Caco-2 (cell line): ENCODE measurements at regions of chr4 and their contacts with region 1.

Region 1: GRCh38 chr4:15001869-15002658 is at the start of gene CPEB2:
- DNase-seq: peak; percentile 63 to 82
- H3K4me3 ChIP-seq: peak within 1 kb of the TSS; percentile 52
- H3K4me3 Mint-ChIP-seq: peak within 1 kb of the TSS; percentile 71
- H3K27ac Mint-ChIP-seq: no peak within 1 kb of the TSS
- H3K4me1 ChIP-seq: 0 out of 2 replicates have a peak, but pooled peaks cover 5% of the 10 kb centered on the region
- H3K4me1 Mint-ChIP-seq: no peaks in the 10 kb centered on the region
- H3K27me3 ChIP-seq: no peaks in the 10 kb centered on the region; the same call in 1 of the 2 replicates
- H3K27me3 Mint-ChIP-seq: peaks cover 22% of the 10 kb centered on the region
- CTCF ChIP-seq: no peak
- total RNA-seq, gene CPEB2: 0.18 and 0.28 TPM in 2 replicates

Region 2: GRCh38 chr4:14827111-14827510 is 175.0 kb before region 1 on chr4:
- CTCF ChIA-PET with region 1: no interaction called
- POLR2A ChIA-PET with region 1: no interaction called
- intact Hi-C with region 1: no loop called
- DNase-seq: no peak
- H3K4me3 ChIP-seq: no peak overlapping the region
- H3K4me3 Mint-ChIP-seq: no peak overlapping the region
- H3K27ac Mint-ChIP-seq: no peak overlapping the region
- H3K4me1 ChIP-seq: no peaks in the 10 kb centered on the region
- H3K4me1 Mint-ChIP-seq: no peaks in the 10 kb centered on the region
- H3K27me3 ChIP-seq: no peaks in the 10 kb centered on the region
- H3K27me3 Mint-ChIP-seq: peaks cover 2% of the 10 kb centered on the region
- CTCF ChIP-seq: no peak

Region 3: GRCh38 chr4:14952352-14952751 is 49.7 kb before region 1 on chr4:
- CTCF ChIA-PET with region 1: interaction called, 11 read pairs
- POLR2A ChIA-PET with region 1: no interaction called
- intact Hi-C with region 1: no loop called
- DNase-seq: no peak
- H3K4me3 ChIP-seq: no peak overlapping the region
- H3K4me3 Mint-ChIP-seq: no peak overlapping the region
- H3K27ac Mint-ChIP-seq: no peak overlapping the region
- H3K4me1 ChIP-seq: no peaks in the 10 kb centered on the region
- H3K4me1 Mint-ChIP-seq: no peaks in the 10 kb centered on the region
- H3K27me3 ChIP-seq: no peaks in the 10 kb centered on the region
- H3K27me3 Mint-ChIP-seq: peaks cover 9% of the 10 kb centered on the region
- CTCF ChIP-seq: no peak